Breast epithelium (tissue), 4 donors: ENCODE measurements at regions of chr4 and their contacts with region 1.

Region 1: DNA sequence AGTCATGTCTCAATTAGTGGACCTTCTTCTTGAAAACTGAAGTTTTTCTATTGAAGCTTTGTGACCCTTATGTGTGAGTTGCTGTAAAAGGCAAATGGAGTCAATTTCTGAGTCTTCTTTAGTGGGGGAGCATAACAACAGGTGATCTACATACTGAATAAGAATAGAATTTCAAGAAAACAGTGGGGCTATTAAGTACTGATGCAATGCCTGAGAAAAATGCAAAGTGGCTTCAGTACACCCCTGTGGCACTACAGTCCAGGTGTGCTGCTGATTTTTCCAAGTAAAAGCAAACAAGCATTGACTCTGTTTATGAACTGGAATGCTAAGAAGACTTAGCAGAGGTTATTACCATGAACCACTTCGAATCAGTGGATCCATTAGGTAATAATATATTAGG is 328.0 kb upstream of the PABPC4L start:
- DNase-seq: no peak
- H3K4me3 ChIP-seq: no peak overlapping the region
- H3K27ac ChIP-seq: no peak overlapping the region
- H3K4me1 ChIP-seq: no peaks in the 10 kb centered on the region
- H3K27me3 ChIP-seq: no peaks in the 10 kb centered on the region
- CTCF ChIP-seq: no peak
- POLR2A ChIP-seq: no peak

Region 2: GRCh38 chr4:134490863-134491262 is 38.8 kb before region 1 on chr4:
- intact Hi-C with region 1: loop called (anchors 2 kb)
- DNase-seq: no peak
- H3K4me3 ChIP-seq: no peak overlapping the region
- H3K27ac ChIP-seq: no peak overlapping the region
- H3K4me1 ChIP-seq: no peaks in the 10 kb centered on the region
- H3K27me3 ChIP-seq: no peaks in the 10 kb centered on the region
- CTCF ChIP-seq: no peak
- POLR2A ChIP-seq: no peak